H1 (cell line): ENCODE measurements at regions of chr1 and their contacts with region 1.

Region 1: DNA sequence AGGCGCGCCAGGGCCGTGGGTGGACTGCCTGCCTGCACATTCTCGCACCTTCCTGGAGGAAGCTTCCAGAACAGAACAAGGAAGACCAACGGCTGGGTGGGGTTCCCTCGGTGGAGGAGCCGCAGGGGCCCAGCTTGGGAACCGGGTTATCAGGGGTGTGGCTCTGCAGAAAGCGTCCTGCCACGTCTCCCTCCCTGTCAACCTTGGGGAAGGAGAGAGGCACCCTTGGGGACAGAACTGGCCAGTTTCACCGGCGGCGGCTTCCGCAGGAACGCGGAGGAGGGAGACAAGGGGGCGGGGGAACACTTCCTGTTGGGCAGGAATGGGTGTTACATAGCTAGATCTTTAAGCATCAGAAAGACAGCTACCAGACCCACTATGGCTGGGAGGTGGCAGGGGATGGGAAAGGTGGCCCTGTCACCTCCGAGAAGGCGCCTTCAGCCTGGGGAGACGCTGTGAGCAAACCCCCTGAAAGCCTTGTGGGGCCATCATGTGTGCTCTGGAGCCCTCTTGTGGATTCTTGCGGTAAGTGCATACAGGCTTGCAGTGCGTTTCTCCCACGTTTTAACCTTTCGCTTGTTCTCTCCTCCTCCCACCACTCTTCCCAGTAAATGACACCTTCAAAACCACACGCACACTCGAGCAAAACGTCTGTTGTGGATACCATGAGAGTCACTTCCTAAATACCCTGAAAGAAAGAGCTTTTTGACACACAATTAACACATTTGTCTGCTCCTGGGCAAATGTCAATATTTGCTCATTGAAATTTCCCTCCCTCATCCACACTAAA is 3.8 kb upstream of the PLEKHA6 start:
- DNase-seq: peak in 1 of 2 experiments; percentile 91
- H3K4me3 ChIP-seq: peak overlapping the region in 3 of 4 experiments; percentile 30 to 50 (median 45); a peak in 6 of 8 replicates
- H3K27ac ChIP-seq: no peak overlapping the region
- H3K4me1 ChIP-seq: peaks cover 8 to 9% (median 9%) of the 10 kb centered on the region in 4 experiments
- H3K27me3 ChIP-seq: peaks cover 0 to 9% (median 5%) of the 10 kb centered on the region in 4 experiments; a peak in 4 of 7 replicates
- CTCF ChIP-seq: peak; percentile 84 to 98 (median 93)
- EP300 ChIP-seq: no peak
- POLR2A ChIP-seq: no peak
- RAD21 ChIP-seq: peak; percentile 96 to 99

Region 2: DNA sequence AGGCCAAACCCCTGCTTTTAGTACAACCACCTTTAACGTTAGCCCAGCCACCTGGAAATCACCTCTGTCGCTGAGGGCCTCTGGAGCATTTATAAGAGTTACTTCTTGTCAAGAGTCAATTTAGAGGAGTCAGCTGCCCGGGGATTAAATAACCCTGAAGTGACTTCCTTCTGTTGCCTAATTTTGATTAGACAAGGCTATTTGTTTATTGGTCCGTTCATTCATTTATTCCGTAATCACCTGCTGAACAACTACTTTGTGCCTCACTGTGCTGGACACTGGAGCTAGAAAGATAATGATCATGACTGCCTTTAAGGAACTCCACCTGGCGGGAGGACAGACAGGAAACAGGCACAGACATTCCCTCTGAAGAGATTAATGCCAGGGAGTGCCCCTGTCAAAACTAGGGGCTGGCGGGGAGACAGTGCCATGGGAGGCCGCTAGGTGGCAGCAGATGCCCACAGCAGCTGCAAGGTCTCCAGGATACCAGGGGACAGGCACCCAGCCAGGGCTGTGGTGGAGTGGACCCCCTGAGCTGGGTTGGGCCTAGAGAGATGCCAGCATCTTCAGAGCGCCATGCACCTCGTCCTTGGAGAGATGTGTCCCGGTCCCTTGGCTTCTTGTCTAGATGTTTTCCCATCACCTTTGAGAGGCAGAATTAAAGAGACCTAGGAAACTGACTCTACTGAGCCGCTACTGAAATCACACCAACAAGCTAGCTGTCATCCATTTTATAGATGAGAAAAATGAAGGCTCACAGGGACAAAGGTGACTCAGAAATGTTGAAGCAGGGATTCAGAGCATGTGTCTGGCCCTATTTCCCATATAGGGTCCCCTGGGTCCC is 201.1 kb before region 1 on chr1:
- CTCF ChIA-PET with region 1: interaction called, 66 read pairs
- POLR2A ChIA-PET with region 1: interaction called, 4 read pairs
- DNase-seq: peak; percentile 63 to 100
- H3K4me3 ChIP-seq: no peak overlapping the region
- H3K27ac ChIP-seq: no peak overlapping the region
- H3K4me1 ChIP-seq: no peaks in the 10 kb centered on the region; a peak in 1 of 7 replicates
- H3K27me3 ChIP-seq: no peaks in the 10 kb centered on the region
- CTCF ChIP-seq: peak; percentile 99
- EP300 ChIP-seq: no peak
- POLR2A ChIP-seq: no peak
- RAD21 ChIP-seq: peak; percentile 100

Region 3: DNA sequence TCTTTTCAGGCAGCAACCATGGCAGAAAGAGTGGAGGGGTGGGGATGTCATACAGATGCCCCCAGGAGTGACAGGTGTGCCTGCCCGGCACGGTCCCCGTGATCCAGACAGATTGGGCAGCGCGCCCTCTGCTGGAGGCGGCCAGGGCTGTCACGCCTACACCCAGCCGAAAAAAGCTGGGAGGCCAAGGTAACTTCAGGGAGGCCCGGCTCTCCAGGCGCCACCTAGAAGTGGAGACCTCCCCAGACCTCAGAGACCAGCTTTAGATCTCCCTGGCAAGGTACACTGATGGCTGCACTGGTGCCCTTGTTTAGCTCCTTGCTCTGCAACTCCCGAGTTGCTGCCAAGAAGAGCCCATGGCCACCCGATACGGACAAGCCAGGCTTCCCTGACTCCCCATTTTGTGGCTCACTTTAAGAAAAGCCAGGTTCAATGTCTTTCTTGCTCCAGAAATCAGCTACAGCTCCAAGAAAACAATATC is 156.4 kb before region 1 on chr1:
- CTCF ChIA-PET with region 1: interaction called, 156 read pairs
- POLR2A ChIA-PET with region 1: no interaction called
- DNase-seq: peak; percentile 41 to 100
- H3K4me3 ChIP-seq: no peak overlapping the region
- H3K27ac ChIP-seq: no peak overlapping the region
- H3K4me1 ChIP-seq: peaks cover 0 to 2% (median 2%) of the 10 kb centered on the region in 4 experiments; a peak in 4 of 7 replicates
- H3K27me3 ChIP-seq: no peaks in the 10 kb centered on the region
- CTCF ChIP-seq: peak; percentile 96 to 98 (median 96)
- EP300 ChIP-seq: no peak
- POLR2A ChIP-seq: no peak
- RAD21 ChIP-seq: peak; percentile 72 to 81

Region 4: GRCh38 chr1:204248643-204249353 is 114.7 kb before region 1 on chr1:
- CTCF ChIA-PET with region 1: interaction called, 318 read pairs
- POLR2A ChIA-PET with region 1: no interaction called
- DNase-seq: no peak
- H3K4me3 ChIP-seq: no peak overlapping the region
- H3K27ac ChIP-seq: no peak overlapping the region
- H3K4me1 ChIP-seq: peaks cover 1 to 6% (median 3%) of the 10 kb centered on the region in 4 experiments; a peak in 6 of 7 replicates
- H3K27me3 ChIP-seq: no peaks in the 10 kb centered on the region
- CTCF ChIP-seq: no peak
- EP300 ChIP-seq: no peak
- POLR2A ChIP-seq: no peak
- RAD21 ChIP-seq: no peak

Region 5: GRCh38 chr1:204296431-204296988 is 67.0 kb before region 1 on chr1:
- CTCF ChIA-PET with region 1: interaction called, 168 read pairs
- POLR2A ChIA-PET with region 1: no interaction called
- DNase-seq: no peak
- H3K4me3 ChIP-seq: no peak overlapping the region
- H3K27ac ChIP-seq: no peak overlapping the region
- H3K4me1 ChIP-seq: peaks cover 0 to 13% (median 5%) of the 10 kb centered on the region in 4 experiments; a peak in 5 of 7 replicates
- H3K27me3 ChIP-seq: no peaks in the 10 kb centered on the region
- CTCF ChIP-seq: peak in 2 of 3 experiments; percentile 24 to 26; a peak in 2 of 4 replicates
- EP300 ChIP-seq: no peak
- POLR2A ChIP-seq: no peak
- RAD21 ChIP-seq: peak; percentile 25 to 56

Region 6: DNA sequence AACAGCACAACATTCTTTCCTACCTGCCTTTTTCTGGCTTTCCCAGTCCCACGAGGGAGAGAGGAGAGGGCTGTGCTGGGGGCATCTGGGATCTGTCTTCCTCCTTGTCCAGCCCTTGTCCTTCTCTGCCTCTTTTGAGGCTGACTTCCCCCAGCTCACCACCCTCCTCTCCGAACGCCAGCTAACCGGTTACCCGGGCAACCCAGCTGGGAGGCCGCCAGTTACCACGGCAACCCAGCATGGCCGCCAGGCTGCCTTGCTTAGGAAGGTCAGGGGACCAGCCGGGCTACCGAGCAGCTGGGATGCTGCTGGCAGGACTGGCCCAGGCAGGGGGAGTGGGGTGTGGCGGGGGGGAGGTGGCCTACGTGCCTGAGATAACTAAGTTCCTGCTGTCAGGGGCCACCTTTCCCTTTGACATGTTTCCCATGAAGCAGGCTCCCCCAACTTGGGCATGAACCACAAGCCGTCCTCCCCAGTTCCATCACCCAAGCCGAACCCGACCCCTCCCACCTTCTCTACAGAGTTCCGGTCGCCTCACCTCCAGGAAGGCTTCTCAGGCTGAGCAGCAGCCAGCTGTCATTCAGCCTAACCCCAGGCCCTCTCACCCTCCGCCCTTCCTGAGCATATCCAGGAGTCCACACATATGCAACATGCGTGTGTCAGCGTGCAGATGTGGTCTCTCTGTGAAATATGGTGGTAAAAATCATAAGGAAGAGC is 12.5 kb before region 1 on chr1:
- CTCF ChIA-PET with region 1: interaction called, 110 read pairs
- POLR2A ChIA-PET with region 1: interaction called, 3 read pairs
- DNase-seq: peak in 1 of 2 experiments; percentile 99
- H3K4me3 ChIP-seq: peak overlapping the region in 1 of 4 experiments; percentile 44; a peak in 3 of 8 replicates
- H3K27ac ChIP-seq: no peak overlapping the region
- H3K4me1 ChIP-seq: peaks cover 6 to 18% (median 14%) of the 10 kb centered on the region in 4 experiments
- H3K27me3 ChIP-seq: no peaks in the 10 kb centered on the region
- CTCF ChIP-seq: no peak
- EP300 ChIP-seq: peak in 1 of 2 experiments; percentile 76; a peak in 1 of 3 replicates
- POLR2A ChIP-seq: no peak
- RAD21 ChIP-seq: no peak